A673 (cell line): ENCODE measurements at regions of chr12 and their contacts with region 1.

Region 1: DNA sequence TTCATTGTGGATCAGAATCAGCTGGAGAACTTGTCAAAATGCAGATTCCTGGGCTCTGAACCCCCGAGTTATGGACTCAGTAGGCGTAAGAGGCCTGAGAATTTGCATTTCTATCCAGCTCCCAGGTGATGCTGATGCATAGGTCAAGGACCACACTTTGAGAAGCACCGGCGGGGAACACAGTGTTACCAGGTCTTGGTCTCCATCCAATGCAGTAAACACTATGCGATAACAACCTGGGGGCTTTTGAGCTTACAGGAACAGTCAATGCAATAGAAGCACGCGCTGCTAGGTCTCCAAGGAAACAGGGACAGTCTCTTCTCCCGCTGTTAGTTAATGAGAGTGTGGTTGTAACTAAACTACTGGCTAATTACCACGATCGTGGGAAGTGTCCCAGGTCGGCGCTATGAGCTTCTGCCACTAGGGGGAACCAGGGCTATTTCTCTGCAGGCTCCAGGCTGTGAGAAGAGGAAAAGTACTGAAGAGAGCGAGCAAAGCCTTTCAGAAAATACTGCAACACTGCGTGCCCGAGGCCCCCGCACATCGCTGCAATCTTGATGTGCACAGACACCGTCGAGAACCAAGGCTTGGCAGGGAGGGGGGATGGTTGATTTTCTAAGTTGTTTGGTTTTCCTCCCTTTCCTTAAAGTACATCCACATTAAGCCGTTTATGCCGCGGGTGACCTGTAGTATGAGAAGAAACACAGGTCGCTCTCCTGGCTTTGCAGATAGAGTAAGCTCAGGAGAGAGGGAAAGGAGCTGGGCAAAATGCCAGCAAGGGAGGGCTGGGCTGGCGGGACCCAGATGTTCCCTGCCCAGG is 52.0 kb upstream of the KCNA1 start:
- DNase-seq: peak; percentile 79
- H3K4me3 ChIP-seq: no peak overlapping the region
- H3K27ac ChIP-seq: no peak overlapping the region
- H3K4me1 ChIP-seq: no peaks in the 10 kb centered on the region
- H3K27me3 ChIP-seq: peaks cover 57% of the 10 kb centered on the region
- CTCF ChIP-seq: peak; percentile 95

Region 2: DNA sequence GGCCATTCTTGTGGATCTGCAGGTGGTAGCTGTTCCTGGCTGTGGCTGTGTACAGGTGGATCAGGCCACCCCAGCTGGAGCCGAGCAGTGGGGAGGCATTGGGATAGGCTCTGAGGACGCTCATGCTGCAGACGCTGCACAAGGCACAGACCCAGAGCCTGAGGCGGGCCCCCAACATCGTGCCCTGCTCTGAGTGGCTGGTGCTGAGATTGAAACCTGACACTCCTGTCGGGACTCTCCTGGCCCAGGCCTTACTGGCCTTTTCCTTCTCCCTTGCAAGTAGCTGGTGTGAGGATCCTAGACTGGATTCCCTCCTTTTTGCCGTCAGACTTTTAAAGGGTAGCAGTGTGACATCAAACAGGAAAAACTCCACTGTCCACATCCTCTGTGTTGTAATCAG is 478.3 kb before region 1 on chr12 and contains the start of gene FGF23:
- CTCF ChIA-PET with region 1: no interaction called
- POLR2A ChIA-PET with region 1: no interaction called
- intact Hi-C with region 1: no loop called
- DNase-seq: peak; percentile 63
- H3K4me3 ChIP-seq: no peak within 1 kb of the TSS
- H3K27ac ChIP-seq: no peak within 1 kb of the TSS
- H3K4me1 ChIP-seq: peaks cover 3% of the 10 kb centered on the region
- H3K27me3 ChIP-seq: peaks cover 32% of the 10 kb centered on the region
- CTCF ChIP-seq: no peak
- total RNA-seq, gene FGF23: not detected in 2 replicates

Region 3: GRCh38 chr12:4579305-4580102 is 278.2 kb before region 1 on chr12:
- CTCF ChIA-PET with region 1: no interaction called
- POLR2A ChIA-PET with region 1: no interaction called
- intact Hi-C with region 1: no loop called
- DNase-seq: peak; percentile 46
- H3K4me3 ChIP-seq: no peak overlapping the region
- H3K27ac ChIP-seq: no peak overlapping the region
- H3K4me1 ChIP-seq: no peaks in the 10 kb centered on the region
- H3K27me3 ChIP-seq: peaks cover 19% of the 10 kb centered on the region
- CTCF ChIP-seq: 0 out of 2 replicates have a peak, but pooled peaks have one; percentile 17

Region 4: GRCh38 chr12:4763549-4763948 is 94.1 kb before region 1 on chr12:
- CTCF ChIA-PET with region 1: no interaction called
- POLR2A ChIA-PET with region 1: no interaction called
- intact Hi-C with region 1: no loop called
- DNase-seq: peak; percentile 65
- H3K4me3 ChIP-seq: no peak overlapping the region
- H3K27ac ChIP-seq: no peak overlapping the region
- H3K4me1 ChIP-seq: no peaks in the 10 kb centered on the region
- H3K27me3 ChIP-seq: peaks cover 27% of the 10 kb centered on the region
- CTCF ChIP-seq: peak; percentile 60

Region 5: DNA sequence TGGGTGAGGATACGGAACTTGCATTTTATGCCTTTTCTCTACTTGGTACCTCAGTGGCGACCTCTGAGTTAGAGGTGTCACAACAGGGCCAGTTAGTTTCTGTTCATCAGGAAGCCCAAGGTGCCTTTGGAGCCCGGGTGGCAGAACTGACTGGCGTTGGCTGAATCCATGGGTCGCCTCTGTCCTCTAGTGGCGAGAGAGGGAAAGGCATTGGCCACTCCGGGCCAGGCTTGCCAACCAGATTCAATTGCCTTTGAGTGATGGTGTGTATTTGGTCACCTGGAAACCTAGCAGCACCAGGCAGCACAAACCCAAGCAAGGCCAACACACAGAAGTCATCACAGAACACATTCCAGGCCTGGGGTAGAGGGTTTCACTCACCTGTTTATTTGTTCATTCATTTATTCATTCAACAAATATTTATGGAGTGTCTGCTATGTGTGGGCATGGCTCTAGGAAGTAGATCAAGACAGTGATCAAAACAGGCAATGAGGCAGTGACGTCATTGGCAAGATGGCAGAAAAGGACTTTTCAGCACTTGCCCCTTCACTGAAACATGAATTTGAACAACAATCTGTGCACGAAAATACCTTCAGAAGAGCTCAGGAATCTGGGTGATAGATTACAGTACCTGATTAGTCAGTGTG is 145.5 kb after region 1 on chr12:
- CTCF ChIA-PET with region 1: interaction called, 4 read pairs
- POLR2A ChIA-PET with region 1: no interaction called
- intact Hi-C with region 1: loop called (anchors 2 kb)
- DNase-seq: peak; percentile 50
- H3K4me3 ChIP-seq: no peak overlapping the region
- H3K27ac ChIP-seq: no peak overlapping the region
- H3K4me1 ChIP-seq: no peaks in the 10 kb centered on the region
- H3K27me3 ChIP-seq: peaks cover 18% of the 10 kb centered on the region
- CTCF ChIP-seq: peak; percentile 79

Region 6: DNA sequence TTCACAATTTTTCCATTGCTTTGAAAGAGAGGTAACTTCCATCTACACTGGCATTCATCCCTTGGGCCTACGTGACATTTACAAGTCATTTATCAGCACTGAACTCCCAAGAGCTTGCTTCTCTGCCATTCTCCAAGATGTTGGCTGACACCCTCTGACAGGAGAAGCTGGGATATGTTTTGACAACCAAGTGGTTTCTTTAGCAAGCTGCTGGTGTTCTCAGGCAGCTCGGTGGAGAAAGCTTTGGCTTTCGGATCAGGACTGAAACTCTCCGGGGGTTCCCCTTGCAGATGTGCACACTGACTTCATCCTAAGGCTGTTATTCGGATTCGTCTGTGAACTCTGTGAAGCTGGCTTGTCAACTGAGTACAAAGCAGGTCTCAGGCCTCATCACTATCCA is 201.7 kb after region 1 on chr12:
- CTCF ChIA-PET with region 1: no interaction called
- POLR2A ChIA-PET with region 1: no interaction called
- intact Hi-C with region 1: no loop called
- DNase-seq: no peak
- H3K4me3 ChIP-seq: no peak overlapping the region
- H3K27ac ChIP-seq: no peak overlapping the region
- H3K4me1 ChIP-seq: no peaks in the 10 kb centered on the region
- H3K27me3 ChIP-seq: peaks cover 36% of the 10 kb centered on the region
- CTCF ChIP-seq: no peak

Region 7: GRCh38 chr12:5083955-5084849 is 226.5 kb after region 1 on chr12:
- CTCF ChIA-PET with region 1: no interaction called
- POLR2A ChIA-PET with region 1: no interaction called
- intact Hi-C with region 1: loop called (anchors 2 kb)
- DNase-seq: peak; percentile 37
- H3K4me3 ChIP-seq: no peak overlapping the region
- H3K27ac ChIP-seq: no peak overlapping the region
- H3K4me1 ChIP-seq: no peaks in the 10 kb centered on the region
- H3K27me3 ChIP-seq: peaks cover 50% of the 10 kb centered on the region
- CTCF ChIP-seq: peak; percentile 70